Activated T-helper 2 cell treated with anti-CD3 and anti-CD28 coated beads, Interferon-gamma antibody, Interleukin-2, Interleukin-4, amounts not matched to agents 10 μg/mL and 5 μg/mL and 100 μg/mL, durations not matched to agents 14 hours and 24 hours and 36 hours (primary cell): ENCODE measurements at regions of chr5 and their contacts with region 1.

Region 1: GRCh38 chr5:139246394-139246793 is 47.1 kb upstream of the MATR3 start:
- DNase-seq: peak; percentile 13
- H3K4me3 Mint-ChIP-seq: peak overlapping the region; percentile 17
- H3K27ac Mint-ChIP-seq: peak overlapping the region; percentile 73
- H3K4me1 Mint-ChIP-seq: peaks cover 22% of the 10 kb centered on the region
- H3K27me3 Mint-ChIP-seq: peaks cover 4% of the 10 kb centered on the region

Region 2: DNA sequence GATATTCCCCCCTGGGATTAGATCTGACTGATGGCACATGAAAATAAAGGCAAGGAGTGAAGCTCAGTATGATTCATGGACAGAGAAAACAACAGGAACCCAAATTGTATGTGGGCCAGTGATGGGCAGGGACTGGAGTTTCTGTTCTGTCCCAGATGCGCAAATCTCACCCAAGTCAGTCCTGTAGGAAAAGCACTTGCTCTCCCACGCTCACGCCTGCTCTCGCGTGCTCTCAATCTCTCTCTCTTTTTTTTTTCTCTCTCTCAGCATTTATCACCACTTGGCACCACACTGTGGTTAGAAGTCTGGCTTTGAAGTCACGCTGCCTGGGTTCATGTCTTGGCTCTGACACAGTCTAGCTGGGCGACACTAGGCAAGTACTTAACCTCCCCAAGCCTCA is 264.8 kb before region 1 on chr5:
- intact Hi-C with region 1: loop called (anchors 5 kb)
- DNase-seq: no peak
- H3K4me3 Mint-ChIP-seq: no peak overlapping the region
- H3K27ac Mint-ChIP-seq: peak overlapping the region; percentile 10
- H3K4me1 Mint-ChIP-seq: peaks cover 52% of the 10 kb centered on the region
- H3K27me3 Mint-ChIP-seq: no peaks in the 10 kb centered on the region

Region 3: GRCh38 chr5:139004374-139005307 is 241.8 kb before region 1 on chr5:
- intact Hi-C with region 1: no loop called
- DNase-seq: no peak
- H3K4me3 Mint-ChIP-seq: no peak overlapping the region
- H3K27ac Mint-ChIP-seq: no peak overlapping the region
- H3K4me1 Mint-ChIP-seq: no peaks in the 10 kb centered on the region
- H3K27me3 Mint-ChIP-seq: no peaks in the 10 kb centered on the region